K562 (cell line): ENCODE measurements at regions of chr22 and their contacts with region 1.

Region 1: DNA sequence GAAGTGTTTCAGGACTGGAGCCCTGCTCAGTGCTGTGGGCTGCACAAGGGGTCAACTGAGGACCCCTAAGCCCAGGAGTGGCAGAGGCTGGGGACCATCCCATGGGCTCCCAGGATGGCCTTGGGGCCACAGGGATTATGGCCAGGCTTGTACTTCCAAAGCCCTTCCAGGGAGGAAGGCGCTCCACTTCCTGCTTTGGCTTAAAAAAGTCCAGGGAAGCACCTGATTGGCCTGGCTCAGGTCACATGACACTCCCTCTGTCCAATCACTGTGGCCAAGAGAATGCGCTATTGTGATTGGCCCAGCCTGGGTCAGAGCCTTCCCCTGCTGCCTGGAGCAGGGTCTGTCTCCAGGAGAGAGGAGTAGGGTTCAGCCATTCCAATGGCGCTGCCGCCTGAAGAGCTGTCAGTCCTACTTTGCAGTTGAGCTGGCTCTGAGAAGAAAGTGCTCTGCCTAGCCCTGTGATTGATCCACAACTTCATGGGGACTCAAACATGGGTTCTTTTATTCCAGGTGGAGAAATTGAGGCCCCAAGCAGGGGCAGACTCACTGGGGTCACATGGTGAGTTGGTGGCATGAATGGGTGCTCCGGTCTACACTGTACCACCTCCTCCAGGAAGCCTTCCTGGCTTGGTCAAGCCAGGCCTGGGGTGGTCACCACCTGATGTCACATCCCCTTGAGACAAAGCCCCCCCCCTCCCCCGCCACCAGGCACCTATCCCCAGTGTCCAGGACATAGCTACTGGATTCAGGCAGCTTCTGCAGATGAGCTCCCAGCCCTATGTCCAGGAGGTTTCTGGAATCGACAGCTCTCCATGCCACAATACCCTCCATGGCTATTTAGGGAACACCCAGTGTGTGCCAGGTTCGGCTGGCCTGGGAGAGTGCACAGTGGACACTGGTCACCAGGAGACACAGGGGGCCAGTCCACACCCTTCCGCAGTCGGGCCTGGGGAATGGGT is 48.2 kb downstream of the RTN4R start:
- DNase-seq: peak; percentile 72 to 98 (median 92)
- ATAC-seq: peak; percentile 76
- H3K4me3 ChIP-seq: no peak overlapping the region
- H3K27ac ChIP-seq: no peak overlapping the region
- H3K4me1 ChIP-seq: peaks cover 0 to 23% of the 10 kb centered on the region in 2 experiments; a peak in 2 of 5 replicates
- H3K27me3 ChIP-seq: peaks cover 25 to 76% of the 10 kb centered on the region in 2 experiments
- CTCF ChIP-seq: no peak
- EP300 ChIP-seq: no peak
- POLR2A ChIP-seq: no peak
- RAD21 ChIP-seq: no peak

Region 2: DNA sequence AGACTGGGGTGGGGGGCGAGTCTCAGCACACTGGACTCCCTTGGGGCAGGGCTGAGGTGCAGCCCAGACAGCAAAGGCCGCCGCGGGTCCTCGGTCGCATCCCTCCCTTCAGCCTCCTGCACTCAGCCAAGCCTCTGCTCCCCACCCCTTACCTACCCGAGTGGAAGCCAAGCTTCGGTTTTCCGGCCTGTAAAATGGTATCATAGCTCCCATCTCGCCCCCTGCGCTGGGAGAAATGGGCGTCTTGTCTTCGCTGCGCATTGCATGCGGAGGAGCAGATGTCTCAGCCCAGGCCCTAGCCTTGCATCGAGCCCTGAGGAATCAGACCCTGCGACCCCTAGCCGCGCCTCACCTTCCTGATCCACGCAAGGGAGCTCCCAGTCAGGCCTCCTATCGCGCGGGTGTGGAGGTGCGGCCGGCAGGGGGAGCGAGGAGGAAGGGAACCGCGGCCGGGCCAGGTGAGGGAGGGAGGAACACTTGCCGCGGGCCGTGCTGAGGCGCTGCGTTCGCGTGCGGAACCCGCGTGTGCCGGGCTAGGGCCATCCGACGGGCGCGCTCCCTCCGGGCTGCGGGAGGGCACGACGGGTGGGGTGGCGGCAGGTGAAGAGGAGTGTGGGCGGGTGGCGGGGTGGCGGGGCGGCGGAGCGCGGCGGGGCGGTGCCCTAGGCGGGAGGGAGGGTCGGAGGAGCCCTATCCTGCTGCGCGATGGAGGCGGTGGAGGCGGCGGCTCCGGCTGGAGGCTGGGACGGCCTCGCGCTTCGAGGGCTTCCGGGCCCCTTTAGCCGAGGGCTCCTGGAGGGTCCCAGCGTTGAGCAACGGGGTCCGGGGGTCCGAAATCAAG is 463.4 kb before region 1 on chr22:
- CTCF ChIA-PET with region 1: no interaction called
- POLR2A ChIA-PET with region 1: no interaction called
- in situ Hi-C with region 1: no loop called
- intact Hi-C with region 1: no loop called
- DNase-seq: peak; percentile 95 to 99 (median 99)
- ATAC-seq: peak; percentile 87
- H3K4me3 ChIP-seq: peak overlapping the region; percentile 29
- H3K27ac ChIP-seq: no peak overlapping the region
- H3K4me1 ChIP-seq: peaks cover 17 to 82% of the 10 kb centered on the region in 2 experiments; a peak in 4 of 5 replicates
- H3K27me3 ChIP-seq: peaks cover 51 to 78% of the 10 kb centered on the region in 2 experiments; a peak in 4 of 5 replicates
- CTCF ChIP-seq: peak; percentile 98 to 99 (median 98)
- EP300 ChIP-seq: peak; percentile 42; the same call in 1 of the 2 replicates
- POLR2A ChIP-seq: no peak
- RAD21 ChIP-seq: peak in 1 of 2 experiments; percentile 100; a peak in 3 of 4 replicates

Region 3: DNA sequence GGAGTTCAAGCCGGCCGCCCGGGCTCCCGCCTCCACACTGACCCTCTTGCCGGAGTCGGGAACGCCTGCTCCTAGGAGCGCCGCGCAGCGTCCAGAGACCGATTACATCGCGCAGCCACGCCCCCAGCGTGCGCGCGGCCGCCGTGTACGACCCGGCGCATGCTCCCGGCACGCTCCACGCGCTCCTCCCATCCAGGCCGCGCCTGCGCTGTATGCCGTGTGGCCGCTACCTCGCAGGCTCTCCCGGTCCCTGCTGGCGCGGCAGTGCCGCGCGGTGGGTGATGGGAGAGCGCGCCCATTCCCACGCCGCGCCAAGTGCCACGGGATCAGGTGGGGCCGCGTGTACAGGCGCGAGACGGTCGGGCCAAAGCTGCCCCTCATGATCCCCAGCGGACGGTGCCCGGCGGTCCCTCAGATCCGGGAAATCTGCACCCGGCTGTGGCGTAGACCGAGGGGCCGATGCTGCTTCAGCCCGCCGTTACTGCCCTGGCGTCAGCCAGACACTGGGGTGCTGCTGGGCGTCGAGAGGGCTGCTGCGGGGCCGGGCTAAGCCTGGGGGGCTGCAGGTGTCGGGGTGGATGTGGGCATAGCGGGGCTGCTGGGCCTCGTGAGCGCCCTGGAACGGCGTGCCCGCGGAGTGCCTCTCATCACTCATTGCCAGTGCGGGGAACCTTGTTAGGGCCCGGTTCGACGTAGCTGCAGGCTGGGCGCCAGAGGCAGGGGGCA is 365.0 kb before region 1 on chr22 and contains the starts of genes GNB1L and RTL10:
- CTCF ChIA-PET with region 1: no interaction called
- POLR2A ChIA-PET with region 1: no interaction called
- in situ Hi-C with region 1: no loop called
- intact Hi-C with region 1: no loop called
- DNase-seq: peak; percentile 100
- ATAC-seq: peak; percentile 92
- H3K4me3 ChIP-seq: peak within 1 kb of the TSS; percentile 62
- H3K27ac ChIP-seq: peak within 1 kb of the TSS; percentile 84
- H3K4me1 ChIP-seq: peaks cover 23 to 63% of the 10 kb centered on the region in 2 experiments
- H3K27me3 ChIP-seq: no peaks in the 10 kb centered on the region
- CTCF ChIP-seq: peak; percentile 29 to 50 (median 49); a peak in 5 of 6 replicates
- EP300 ChIP-seq: peak; percentile 57
- POLR2A ChIP-seq: no peak
- RAD21 ChIP-seq: 0 out of 4 replicates have a peak, but pooled peaks of 1 of the 2 experiments have one; percentile 46
- polyA plus RNA-seq, gene GNB1L: 0.56 to 3.5 TPM
- polyA plus RNA-seq, gene RTL10: 23.6 to 33.7 TPM

Region 4: GRCh38 chr22:20194681-20195593 is 25.0 kb before region 1 on chr22:
- CTCF ChIA-PET with region 1: no interaction called
- POLR2A ChIA-PET with region 1: no interaction called
- in situ Hi-C with region 1: no loop called
- intact Hi-C with region 1: no loop called
- DNase-seq: no peak
- ATAC-seq: peak; percentile 27; the same call in 2 of the 3 replicates
- H3K4me3 ChIP-seq: no peak overlapping the region
- H3K27ac ChIP-seq: no peak overlapping the region
- H3K4me1 ChIP-seq: peaks cover 0 to 49% of the 10 kb centered on the region in 2 experiments; a peak in 2 of 5 replicates
- H3K27me3 ChIP-seq: peaks cover 84 to 95% of the 10 kb centered on the region in 2 experiments
- CTCF ChIP-seq: peak; percentile 29 to 57 (median 39); a peak in 5 of 6 replicates
- EP300 ChIP-seq: no peak
- POLR2A ChIP-seq: no peak
- RAD21 ChIP-seq: peak in 1 of 2 experiments; percentile 29; a peak in 1 of 4 replicates

Region 5: DNA sequence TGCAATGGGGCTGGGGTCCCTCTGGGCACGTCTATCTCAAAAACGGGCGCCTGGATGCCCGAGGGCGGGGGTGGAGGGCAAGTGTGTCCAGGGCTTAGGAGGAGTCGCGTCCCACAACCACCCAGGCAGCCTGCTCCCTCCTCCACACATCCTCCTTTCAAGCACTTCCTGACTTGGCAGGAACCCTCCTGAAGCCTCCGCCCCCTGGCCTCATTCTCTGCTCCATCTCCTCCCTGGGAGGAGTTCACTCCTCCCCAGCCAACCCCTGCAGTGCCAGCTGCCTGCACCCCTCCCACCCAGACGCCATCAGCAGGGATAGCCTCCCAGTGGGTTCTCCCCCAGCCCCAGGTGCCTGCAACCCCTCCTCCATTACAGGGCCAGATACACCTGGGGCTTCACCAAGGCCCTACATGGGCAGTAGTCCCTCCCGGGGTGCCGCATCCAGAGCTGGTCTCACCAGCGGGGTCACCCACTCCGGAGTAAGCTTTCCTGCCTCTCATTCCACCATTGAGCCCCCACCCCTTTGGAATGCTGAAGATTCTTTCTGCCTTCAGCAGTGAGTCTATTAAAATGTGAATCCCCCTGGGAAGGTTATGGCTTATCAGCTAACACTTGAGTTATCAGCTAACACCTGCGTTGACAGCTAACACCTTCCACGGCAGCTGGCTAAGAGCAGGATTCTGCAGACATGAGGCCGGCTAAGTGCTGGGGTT is 23.7 kb after region 1 on chr22:
- CTCF ChIA-PET with region 1: no interaction called
- POLR2A ChIA-PET with region 1: interaction called, 3 read pairs
- in situ Hi-C with region 1: no loop called
- intact Hi-C with region 1: loop called (anchors 2 kb)
- DNase-seq: peak; percentile 73 to 91 (median 86)
- ATAC-seq: peak; percentile 22
- H3K4me3 ChIP-seq: no peak overlapping the region
- H3K27ac ChIP-seq: no peak overlapping the region
- H3K4me1 ChIP-seq: peaks cover 16 to 90% of the 10 kb centered on the region in 2 experiments; a peak in 3 of 5 replicates
- H3K27me3 ChIP-seq: peaks cover 31 to 92% of the 10 kb centered on the region in 2 experiments; a peak in 4 of 5 replicates
- CTCF ChIP-seq: 0 out of 6 replicates have a peak, but pooled peaks of 1 of the 3 experiments have one; percentile 0
- EP300 ChIP-seq: no peak
- POLR2A ChIP-seq: no peak
- RAD21 ChIP-seq: no peak